ENCODE measurements at regions of chr3 and their contacts with region 1.

Region 1: DNA sequence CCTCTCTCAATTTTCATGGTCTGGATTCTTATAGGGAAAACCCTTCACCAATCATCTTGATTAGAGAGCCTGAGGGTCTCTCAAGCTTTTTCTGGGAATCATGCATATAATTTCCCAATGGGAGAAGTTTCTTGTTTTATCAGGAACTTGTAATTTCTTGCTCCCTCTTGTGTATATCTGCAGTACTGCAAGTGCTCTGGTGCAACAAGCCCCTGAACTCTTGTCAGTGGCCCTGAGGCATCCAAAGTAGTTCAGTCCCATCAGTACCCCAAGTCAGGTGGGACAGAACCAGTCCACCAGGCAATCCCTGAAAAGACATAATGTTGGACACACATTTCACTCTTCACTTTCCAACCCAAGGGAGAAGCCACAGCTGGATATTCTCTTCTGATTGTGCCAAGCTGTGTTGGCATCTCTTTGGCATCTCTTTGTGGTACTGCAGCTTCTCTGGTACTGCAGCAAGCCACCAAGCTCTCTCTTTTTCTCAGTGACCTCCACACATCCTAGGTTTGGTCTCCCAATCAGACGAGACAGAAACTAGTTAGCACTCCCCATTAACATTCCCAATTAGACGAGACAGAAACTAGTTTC is 214.5 kb downstream of the ZIC4 start:
- DNase-seq: peak; percentile 81
- H3K4me3 Mint-ChIP-seq: no peak overlapping the region
- H3K27ac Mint-ChIP-seq: no peak overlapping the region
- H3K4me1 Mint-ChIP-seq: no peaks in the 10 kb centered on the region
- H3K27me3 Mint-ChIP-seq: no peaks in the 10 kb centered on the region
- CTCF ChIP-seq: peak; percentile 97

Region 2: DNA sequence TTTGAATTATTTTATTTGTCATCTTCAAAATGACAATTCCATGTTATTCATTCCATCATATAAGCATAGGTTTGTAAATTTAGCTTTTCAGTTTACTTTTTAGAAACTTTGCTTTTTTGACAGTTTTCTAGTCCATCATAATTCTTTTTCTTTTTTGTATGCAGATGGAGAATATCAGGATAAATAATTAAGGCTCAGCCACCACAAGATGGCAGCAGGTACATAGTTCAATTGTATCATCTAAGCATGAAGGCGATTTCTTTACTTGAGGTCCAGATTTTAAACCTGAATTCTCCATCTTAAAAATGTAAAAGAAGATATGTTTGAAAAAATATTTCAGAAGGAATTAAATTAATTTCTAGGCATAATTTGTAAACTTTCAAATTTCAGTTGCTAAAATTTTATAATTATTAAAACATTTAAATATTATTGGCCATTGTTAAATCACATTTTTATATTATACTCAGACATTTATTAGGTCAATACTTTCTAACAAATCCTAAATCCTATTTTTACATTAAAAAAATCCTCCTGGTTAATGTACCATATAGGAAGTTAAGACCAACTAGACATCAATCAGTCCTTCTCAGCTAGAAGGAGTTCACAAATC is 601.9 kb before region 1 on chr3:
- CTCF ChIA-PET with region 1: no interaction called
- intact Hi-C with region 1: loop called (anchors 5 kb)
- DNase-seq: peak; percentile 64
- H3K4me3 Mint-ChIP-seq: no peak overlapping the region
- H3K27ac Mint-ChIP-seq: no peak overlapping the region
- H3K4me1 Mint-ChIP-seq: peaks cover 2% of the 10 kb centered on the region
- H3K27me3 Mint-ChIP-seq: no peaks in the 10 kb centered on the region
- CTCF ChIP-seq: peak; percentile 65

Region 3: DNA sequence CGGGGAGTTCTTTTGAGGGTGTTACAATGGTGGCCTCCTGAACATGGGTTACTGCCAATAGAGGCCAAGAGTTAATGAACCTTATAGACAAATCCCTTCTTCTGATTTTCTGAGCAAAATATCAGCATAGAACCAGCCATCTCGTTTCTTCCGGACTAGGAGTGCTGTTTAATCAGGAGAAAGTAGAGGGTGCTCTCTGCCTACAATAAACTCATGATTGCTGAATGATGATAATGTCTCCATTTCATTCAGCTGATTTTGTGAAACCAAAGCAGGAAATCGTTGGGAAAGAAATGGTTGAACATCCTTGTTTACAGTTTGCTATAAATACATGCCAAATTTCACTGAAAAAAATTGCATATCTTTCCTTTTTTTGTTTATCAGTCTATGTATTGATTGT is 444.0 kb before region 1 on chr3:
- CTCF ChIA-PET with region 1: interaction called, 4 read pairs
- intact Hi-C with region 1: loop called (anchors 1 kb)
- DNase-seq: peak; percentile 20
- H3K4me3 Mint-ChIP-seq: no peak overlapping the region
- H3K27ac Mint-ChIP-seq: no peak overlapping the region
- H3K4me1 Mint-ChIP-seq: no peaks in the 10 kb centered on the region
- H3K27me3 Mint-ChIP-seq: no peaks in the 10 kb centered on the region
- CTCF ChIP-seq: no peak

Region 4: GRCh38 chr3:146817704-146818103 is 374.2 kb before region 1 on chr3:
- CTCF ChIA-PET with region 1: interaction called, 11 read pairs
- intact Hi-C with region 1: loop called (anchors 1 kb)
- DNase-seq: no peak
- H3K4me3 Mint-ChIP-seq: no peak overlapping the region
- H3K27ac Mint-ChIP-seq: no peak overlapping the region
- H3K4me1 Mint-ChIP-seq: no peaks in the 10 kb centered on the region
- H3K27me3 Mint-ChIP-seq: no peaks in the 10 kb centered on the region
- CTCF ChIP-seq: peak; percentile 32

Region 5: GRCh38 chr3:147119989-147120388 is 71.9 kb before region 1 on chr3:
- CTCF ChIA-PET with region 1: interaction called, 8 read pairs
- intact Hi-C with region 1: loop called (anchors 1 kb)
- DNase-seq: no peak
- H3K4me3 Mint-ChIP-seq: no peak overlapping the region
- H3K27ac Mint-ChIP-seq: no peak overlapping the region
- H3K4me1 Mint-ChIP-seq: no peaks in the 10 kb centered on the region
- H3K27me3 Mint-ChIP-seq: no peaks in the 10 kb centered on the region
- CTCF ChIP-seq: peak; percentile 47

Measured in Calu3 (cell line).